ENCODE measurements at regions of chr1 and their contacts with region 1.

Region 1: DNA sequence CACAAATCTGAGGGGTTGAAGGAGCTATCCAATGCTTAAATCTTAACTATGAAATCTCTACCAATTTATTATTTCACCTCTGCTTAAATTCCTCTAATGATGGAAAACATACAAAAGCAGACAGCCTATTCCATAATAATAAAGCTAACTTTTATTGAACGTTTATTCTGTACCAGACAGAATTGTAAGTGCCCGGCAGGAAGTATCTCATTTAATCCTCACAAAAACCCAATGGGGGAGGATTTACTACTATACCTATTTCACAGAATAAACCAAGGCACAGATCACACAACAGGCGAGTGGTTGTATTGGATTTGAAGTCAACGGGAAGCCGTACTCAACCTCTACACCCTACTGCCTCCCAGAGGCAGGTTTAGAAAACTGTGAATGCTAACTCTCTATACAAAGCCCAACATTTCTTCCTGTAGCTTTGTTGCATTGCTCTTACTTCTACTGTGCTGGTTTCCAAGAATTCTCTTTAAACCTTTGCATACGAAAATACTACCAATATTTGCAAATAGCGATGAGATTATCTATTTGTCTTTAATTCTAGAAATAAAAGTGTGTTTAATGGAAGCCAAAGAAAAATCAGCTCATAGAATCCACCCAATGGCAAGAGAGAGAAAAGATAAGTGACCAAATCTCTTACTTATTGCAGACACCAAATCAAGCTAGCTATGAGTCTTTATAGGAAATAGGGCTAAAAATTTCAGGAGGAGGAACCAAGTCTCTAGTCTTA is 33.5 kb upstream of the C1orf53 start:
- DNase-seq: peak; percentile 64
- H3K4me3 ChIP-seq: no peak overlapping the region
- H3K27ac ChIP-seq: no peak overlapping the region
- H3K4me1 ChIP-seq: no peaks in the 10 kb centered on the region
- H3K27me3 ChIP-seq: no peaks in the 10 kb centered on the region
- CTCF ChIP-seq: peak; percentile 65

Region 2: GRCh38 chr1:197614916-197615692 is 253.8 kb before region 1 on chr1:
- CTCF ChIA-PET with region 1: interaction called, 7 read pairs
- POLR2A ChIA-PET with region 1: no interaction called
- intact Hi-C with region 1: loop called (anchors 2 kb)
- DNase-seq: peak; percentile 49
- H3K4me3 ChIP-seq: no peak overlapping the region
- H3K27ac ChIP-seq: no peak overlapping the region
- H3K4me1 ChIP-seq: no peaks in the 10 kb centered on the region
- H3K27me3 ChIP-seq: no peaks in the 10 kb centered on the region
- CTCF ChIP-seq: peak; percentile 71

Region 3: GRCh38 chr1:198064201-198064600 is 195.3 kb after region 1 on chr1:
- CTCF ChIA-PET with region 1: no interaction called
- POLR2A ChIA-PET with region 1: no interaction called
- intact Hi-C with region 1: no loop called
- DNase-seq: no peak
- H3K4me3 ChIP-seq: no peak overlapping the region
- H3K27ac ChIP-seq: no peak overlapping the region
- H3K4me1 ChIP-seq: no peaks in the 10 kb centered on the region
- H3K27me3 ChIP-seq: no peaks in the 10 kb centered on the region
- CTCF ChIP-seq: no peak

Measured in A673 (cell line).